ENCODE measurements at regions of chr1 and their contacts with region 1.

Region 1: DNA sequence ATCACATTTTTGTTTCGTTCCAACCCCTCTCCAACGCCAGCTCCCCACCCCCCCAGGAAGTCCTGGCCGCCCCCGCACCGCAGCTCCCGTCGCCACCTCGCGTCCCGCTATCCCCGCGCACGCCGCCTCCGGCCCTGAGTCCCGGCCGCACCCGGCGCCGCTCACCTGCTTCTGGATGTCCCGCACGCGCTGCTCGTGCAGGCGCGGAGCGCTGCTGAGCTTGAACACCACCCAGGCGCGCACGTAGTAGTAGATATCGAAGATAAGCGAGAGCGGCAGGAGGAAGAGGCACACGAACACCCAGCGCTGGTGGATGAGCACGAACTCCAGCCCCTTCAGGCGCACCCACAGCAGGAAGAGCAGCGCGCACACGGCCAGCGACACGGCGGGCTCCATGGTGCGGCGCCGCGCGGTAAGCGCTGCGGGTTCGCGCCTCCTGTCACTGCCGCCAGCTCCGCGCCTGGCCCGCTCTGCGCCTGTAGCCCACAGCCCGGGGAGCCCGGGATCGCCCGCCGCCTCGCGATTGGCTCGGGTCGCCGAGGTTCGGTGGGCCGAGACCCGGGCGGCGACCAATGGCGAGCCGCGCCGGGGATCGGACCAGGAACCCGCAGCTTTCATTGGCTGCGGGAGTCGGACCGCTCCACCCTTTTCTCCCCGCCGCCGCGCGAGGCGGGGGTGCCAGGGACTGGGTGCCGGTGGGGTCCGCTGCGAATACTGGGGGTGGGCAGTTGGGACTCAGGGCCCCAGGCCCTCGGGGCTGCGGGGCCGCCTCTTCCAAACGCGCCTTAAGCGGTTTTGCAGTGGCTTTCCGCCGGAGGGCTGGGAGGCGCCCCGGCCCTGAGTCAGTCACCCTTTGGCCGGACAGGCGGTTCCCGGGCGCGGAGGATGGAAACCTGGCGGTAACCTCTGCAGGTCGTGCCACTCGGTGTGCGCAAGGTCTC is at the start of gene DHCR24:
- DNase-seq: peak; percentile 87 to 92 (median 88)
- ATAC-seq: peak; percentile 94 to 99 (median 98)
- H3K4me3 ChIP-seq: peak within 1 kb of the TSS; percentile 59 to 95 (median 78)
- H3K27ac ChIP-seq: peak within 1 kb of the TSS in 8 of 12 donors; percentile 22 to 74 (median 58)
- H3K4me1 ChIP-seq: peaks cover 0 to 33% (median 9%) of the 10 kb centered on the region in 12 donors
- H3K27me3 ChIP-seq: peaks cover 0 to 7% (median 0%) of the 10 kb centered on the region in 9 donors
- CTCF ChIP-seq: peak in 1 of 12 donors; percentile 8
- POLR2A ChIP-seq: peak in 1 of 2 donors; percentile 74
- total RNA-seq, gene DHCR24: 13.8 to 91.4 (median 25.4) TPM

Region 2: GRCh38 chr1:54709547-54710467 is 177.2 kb before region 1 on chr1:
- intact Hi-C with region 1: no loop called
- DNase-seq: no peak
- ATAC-seq: no peak
- H3K4me3 ChIP-seq: no peak overlapping the region
- H3K27ac ChIP-seq: no peak overlapping the region
- H3K4me1 ChIP-seq: peaks cover 0 to 2% (median under 1%) of the 10 kb centered on the region in 12 donors
- H3K27me3 ChIP-seq: no peaks in the 10 kb centered on the region
- CTCF ChIP-seq: no peak
- POLR2A ChIP-seq: no peak

Region 3: GRCh38 chr1:54927472-54928240 is 40.7 kb after region 1 on chr1:
- intact Hi-C with region 1: loop called in 1 of 10 experiments (anchors 5 kb)
- DNase-seq: peak in 4 of 5 donors; percentile 71 to 80 (median 75)
- ATAC-seq: peak; percentile 31 to 78 (median 60)
- H3K4me3 ChIP-seq: no peak overlapping the region
- H3K27ac ChIP-seq: peak overlapping the region; percentile 56 to 91 (median 76)
- H3K4me1 ChIP-seq: peaks cover 0 to 35% (median 14%) of the 10 kb centered on the region in 12 donors
- H3K27me3 ChIP-seq: no peaks in the 10 kb centered on the region
- CTCF ChIP-seq: no peak
- POLR2A ChIP-seq: peak in 1 of 2 donors; percentile 12

Region 4: GRCh38 chr1:54944610-54945544 is 57.9 kb after region 1 on chr1:
- intact Hi-C with region 1: loop called in 4 of 10 experiments (anchors 5 kb)
- DNase-seq: peak; percentile 55 to 76 (median 69)
- ATAC-seq: peak; percentile 38 to 77 (median 74)
- H3K4me3 ChIP-seq: peak overlapping the region in 2 of 12 donors; percentile 16 to 42
- H3K27ac ChIP-seq: no peak overlapping the region
- H3K4me1 ChIP-seq: peaks cover 0 to 7% (median 0%) of the 10 kb centered on the region in 12 donors
- H3K27me3 ChIP-seq: no peaks in the 10 kb centered on the region
- CTCF ChIP-seq: peak; percentile 68 to 92 (median 80)
- POLR2A ChIP-seq: no peak

Measured in heart left ventricle (tissue), 16 donors.